Activated CD8-positive, alpha-beta T cell treated with anti-CD3 and anti-CD28 coated beads, Interleukin-2, amount 10 ng/mL, durations not matched to agents 7 days and 5 days (primary cell): ENCODE measurements at regions of chr1 and their contacts with region 1.

Region 1: DNA sequence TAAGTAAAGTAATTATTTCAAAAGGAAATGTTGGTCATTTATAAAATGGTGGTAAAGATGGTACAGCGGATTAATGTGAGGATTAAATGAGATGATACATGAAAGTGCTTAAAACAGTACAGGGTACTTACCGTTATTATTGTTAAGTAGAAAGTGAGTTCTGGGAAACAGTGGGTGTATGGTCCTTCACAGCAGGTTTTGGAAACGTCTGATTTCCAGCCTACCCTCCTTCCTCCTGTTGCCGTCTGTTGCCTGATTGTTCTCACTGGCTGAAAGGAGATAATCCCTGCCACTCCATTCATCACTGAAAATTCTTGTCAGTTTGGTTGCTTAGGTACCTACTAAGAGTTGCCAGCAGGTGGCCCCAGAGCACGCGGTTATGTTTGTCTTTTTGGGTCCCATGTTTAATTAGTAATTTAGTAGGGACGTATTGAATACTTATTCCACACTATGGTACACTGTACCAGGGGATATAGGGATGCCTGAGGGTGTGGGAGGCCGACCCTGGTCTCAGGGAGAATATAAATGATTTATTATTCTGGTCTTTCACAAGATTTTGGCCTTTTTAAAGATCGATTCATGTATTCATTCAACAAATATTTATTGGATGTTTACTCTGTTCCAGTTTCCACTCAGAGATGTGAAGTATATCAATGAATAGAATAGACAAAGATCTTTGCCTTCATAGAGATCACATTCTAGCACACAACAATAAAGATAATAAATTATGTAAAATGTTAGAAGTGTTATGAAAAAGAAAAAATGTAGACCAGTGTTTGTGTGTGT is 30.8 kb upstream of the RPTN start:
- DNase-seq: peak; percentile 77
- ATAC-seq: peak; percentile 57
- H3K4me3 Mint-ChIP-seq: peak overlapping the region; percentile 66
- H3K27ac Mint-ChIP-seq: no peak overlapping the region
- H3K4me1 Mint-ChIP-seq: peaks cover 6% of the 10 kb centered on the region
- H3K27me3 Mint-ChIP-seq: peaks cover 12% of the 10 kb centered on the region

Region 2: DNA sequence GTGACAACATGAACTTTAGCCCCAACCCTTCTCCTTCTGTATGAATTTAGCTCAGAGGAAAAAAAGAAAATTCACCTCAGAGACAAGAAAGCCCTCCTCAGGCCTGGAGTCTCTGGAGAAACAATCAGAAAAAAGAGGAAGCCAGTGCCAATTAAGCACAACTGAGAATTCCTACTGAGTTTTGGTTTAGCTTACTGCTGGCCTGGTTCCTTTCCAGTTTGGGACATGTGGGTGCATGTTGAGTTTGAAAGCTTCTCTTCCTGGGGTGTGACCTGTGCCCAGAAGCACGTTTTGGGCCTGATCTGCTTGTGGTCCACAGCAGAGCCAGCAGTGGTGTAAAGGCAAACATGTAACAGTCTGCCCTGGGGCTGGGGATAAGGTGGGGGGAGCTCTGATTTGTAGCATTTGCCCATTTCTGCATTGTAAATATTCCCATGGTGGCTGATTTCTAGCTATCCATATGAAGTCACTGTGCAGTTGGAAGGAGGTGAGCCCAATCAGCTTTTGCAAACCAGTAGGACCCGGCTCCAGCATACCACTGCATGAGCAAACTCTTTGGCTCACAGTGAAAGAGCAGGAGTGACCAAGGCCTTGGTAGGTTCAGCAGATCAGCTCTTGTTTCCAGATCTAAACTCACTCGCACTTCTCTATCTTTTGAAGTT is 331.7 kb before region 1 on chr1:
- CTCF ChIA-PET with region 1: no interaction called
- POLR2A ChIA-PET with region 1: no interaction called
- DNase-seq: no peak
- ATAC-seq: no peak
- H3K4me3 Mint-ChIP-seq: no peak overlapping the region
- H3K27ac Mint-ChIP-seq: no peak overlapping the region
- H3K4me1 Mint-ChIP-seq: no peaks in the 10 kb centered on the region
- H3K27me3 Mint-ChIP-seq: peaks cover 12% of the 10 kb centered on the region

Region 3: DNA sequence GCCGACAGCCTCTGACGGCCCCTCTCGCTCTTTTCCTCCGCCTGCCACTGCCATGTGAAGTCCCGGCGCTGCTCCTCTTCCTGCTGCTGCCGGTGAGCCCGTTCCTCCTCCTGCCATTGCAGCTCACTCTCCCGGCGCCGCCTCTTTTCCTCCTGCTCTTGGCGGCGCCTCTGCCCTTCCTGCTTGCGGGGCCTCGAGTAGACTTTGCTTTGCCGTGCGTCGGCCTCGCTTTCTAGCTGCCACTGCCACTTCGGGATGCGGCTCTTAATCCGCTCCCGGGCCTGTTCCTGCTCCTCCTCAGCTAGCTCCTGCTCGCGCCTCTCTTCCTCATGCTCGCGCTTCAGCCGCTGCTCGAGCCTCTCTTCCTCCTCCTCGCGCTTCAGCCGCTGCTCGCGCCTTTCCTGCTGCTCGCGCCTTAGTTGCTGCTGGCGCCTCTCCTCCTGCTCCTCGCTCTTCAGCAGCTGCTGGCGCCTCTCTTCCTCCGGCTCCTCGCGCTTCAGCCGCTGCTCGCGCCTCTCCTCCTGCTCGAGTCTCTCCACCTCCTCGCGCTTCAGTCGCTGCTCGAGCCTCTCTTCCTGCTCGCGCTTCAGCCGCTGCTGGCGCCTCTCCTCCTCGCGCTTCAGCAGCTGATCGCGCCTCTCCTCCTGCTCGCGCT is 78.9 kb before region 1 on chr1:
- CTCF ChIA-PET with region 1: interaction called, 10 read pairs
- POLR2A ChIA-PET with region 1: no interaction called
- DNase-seq: peak; percentile 44
- ATAC-seq: peak; percentile 70
- H3K4me3 Mint-ChIP-seq: no peak overlapping the region
- H3K27ac Mint-ChIP-seq: no peak overlapping the region
- H3K4me1 Mint-ChIP-seq: peaks cover 5% of the 10 kb centered on the region
- H3K27me3 Mint-ChIP-seq: peaks cover 20% of the 10 kb centered on the region

Region 4: GRCh38 chr1:152175544-152175943 is 14.3 kb before region 1 on chr1:
- CTCF ChIA-PET with region 1: interaction called, 64 read pairs
- POLR2A ChIA-PET with region 1: no interaction called
- DNase-seq: no peak
- ATAC-seq: no peak
- H3K4me3 Mint-ChIP-seq: no peak overlapping the region
- H3K27ac Mint-ChIP-seq: no peak overlapping the region
- H3K4me1 Mint-ChIP-seq: no peaks in the 10 kb centered on the region
- H3K27me3 Mint-ChIP-seq: peaks cover 5% of the 10 kb centered on the region

Region 5: GRCh38 chr1:152244576-152245273 is 54.9 kb after region 1 on chr1:
- CTCF ChIA-PET with region 1: no interaction called
- POLR2A ChIA-PET with region 1: no interaction called
- DNase-seq: no peak
- ATAC-seq: no peak
- H3K4me3 Mint-ChIP-seq: no peak overlapping the region
- H3K27ac Mint-ChIP-seq: no peak overlapping the region
- H3K4me1 Mint-ChIP-seq: no peaks in the 10 kb centered on the region
- H3K27me3 Mint-ChIP-seq: peaks cover 12% of the 10 kb centered on the region

Region 6: DNA sequence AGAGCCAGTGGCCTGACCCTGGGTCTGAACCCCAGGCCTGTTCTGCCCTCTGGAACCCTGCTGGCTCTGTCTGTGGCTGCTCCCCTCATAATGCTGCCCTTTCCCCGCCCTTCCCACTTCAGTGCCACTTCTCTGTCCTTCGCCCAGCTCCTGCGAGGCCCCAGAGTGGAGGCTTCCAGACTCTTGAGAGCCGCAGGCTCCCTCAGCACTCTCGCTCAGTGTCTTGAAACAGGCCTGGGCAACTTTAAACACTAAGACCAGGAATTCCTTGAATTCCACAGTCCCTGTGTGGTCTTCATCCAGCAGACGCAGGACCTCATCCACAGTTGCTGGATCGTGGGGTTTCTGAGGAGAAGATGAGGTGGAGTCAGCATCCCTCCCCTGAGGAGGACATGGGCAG is 220.7 kb after region 1 on chr1:
- CTCF ChIA-PET with region 1: no interaction called
- POLR2A ChIA-PET with region 1: no interaction called
- DNase-seq: no peak
- ATAC-seq: no peak
- H3K4me3 Mint-ChIP-seq: no peak overlapping the region
- H3K27ac Mint-ChIP-seq: no peak overlapping the region
- H3K4me1 Mint-ChIP-seq: no peaks in the 10 kb centered on the region
- H3K27me3 Mint-ChIP-seq: peaks cover 10% of the 10 kb centered on the region

Region 7: GRCh38 chr1:152795686-152796085 is 605.8 kb after region 1 on chr1:
- CTCF ChIA-PET with region 1: no interaction called
- POLR2A ChIA-PET with region 1: no interaction called
- DNase-seq: no peak
- ATAC-seq: no peak
- H3K4me3 Mint-ChIP-seq: no peak overlapping the region
- H3K27ac Mint-ChIP-seq: no peak overlapping the region
- H3K4me1 Mint-ChIP-seq: no peaks in the 10 kb centered on the region
- H3K27me3 Mint-ChIP-seq: peaks cover 2% of the 10 kb centered on the region